K562 (cell line): ENCODE measurements at regions of chr12 and their contacts with region 1.

Region 1: DNA sequence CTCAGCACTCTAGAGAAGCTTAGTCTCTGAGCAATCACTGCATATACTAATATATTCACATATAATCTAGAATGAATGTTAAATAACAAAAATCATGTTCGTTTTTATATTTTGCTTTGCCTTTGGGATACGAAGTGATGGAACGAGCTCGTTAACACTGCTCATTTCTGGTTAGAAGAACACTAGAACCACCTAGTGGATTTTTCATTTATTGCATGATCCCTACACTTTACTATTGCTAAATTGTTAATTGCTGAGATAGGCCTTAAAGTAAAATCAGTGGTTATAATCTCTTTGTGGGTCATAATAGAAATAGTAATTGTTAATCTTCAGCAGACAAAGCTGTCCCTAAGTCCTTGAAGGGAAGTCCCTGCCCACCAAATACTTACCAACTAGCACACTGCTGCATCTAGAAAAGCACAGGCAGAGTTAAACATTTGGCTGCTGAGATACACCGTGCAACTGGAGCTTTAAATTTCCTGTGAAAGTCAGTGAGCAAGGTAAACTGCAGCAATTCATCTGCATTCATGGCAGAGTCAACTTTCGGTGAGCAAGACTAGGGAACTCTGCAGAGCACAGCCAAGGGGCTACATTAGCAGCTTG is 353.7 kb downstream of the APAF1 start:
- DNase-seq: peak; percentile 39 to 46 (median 41)
- ATAC-seq: peak; percentile 91
- H3K4me3 ChIP-seq: no peak overlapping the region
- H3K27ac ChIP-seq: no peak overlapping the region
- H3K4me1 ChIP-seq: no peaks in the 10 kb centered on the region
- H3K27me3 ChIP-seq: 0 out of 5 replicates have a peak, but pooled peaks cover 0 to 4% of the 10 kb centered on the region in 2 experiments
- CTCF ChIP-seq: peak; percentile 44 to 80 (median 44); a peak in 4 of 6 replicates
- EP300 ChIP-seq: no peak
- POLR2A ChIP-seq: no peak
- RAD21 ChIP-seq: peak; percentile 78 to 91

Region 2: DNA sequence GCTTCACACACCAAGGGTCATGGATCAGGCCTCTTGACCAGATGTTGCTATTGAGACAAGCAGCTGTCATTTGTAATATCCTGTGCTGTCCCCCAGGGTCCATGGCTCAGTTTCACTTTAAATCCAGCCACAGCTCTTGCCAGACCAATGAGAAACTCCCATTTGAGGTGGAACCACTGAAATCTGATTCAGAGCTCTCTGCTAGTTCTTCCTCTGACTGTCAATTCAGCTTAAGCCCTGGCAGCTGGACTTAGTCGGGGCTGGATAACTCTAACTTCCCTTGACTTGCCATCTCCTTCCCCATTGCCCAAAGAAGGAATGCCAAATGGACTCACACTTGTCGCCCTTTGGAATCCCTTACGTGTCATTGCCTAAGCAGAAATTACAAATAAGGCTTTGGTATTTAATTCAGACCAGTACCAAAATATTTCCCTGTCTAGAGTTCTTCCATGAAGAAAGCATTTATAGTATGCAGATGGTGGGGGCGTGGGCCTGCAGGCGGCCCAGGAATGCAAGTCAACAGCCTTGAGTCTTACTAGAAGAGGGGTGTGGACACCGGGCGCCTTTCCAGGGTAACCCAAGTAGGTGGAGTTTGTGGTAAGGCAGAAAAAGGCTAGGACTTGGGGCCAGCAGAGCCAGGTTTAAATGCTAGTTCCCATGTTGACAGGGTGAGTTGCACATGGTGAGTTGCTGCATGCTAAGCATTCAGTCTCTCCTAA is 580.3 kb before region 1 on chr12:
- CTCF ChIA-PET with region 1: no interaction called
- POLR2A ChIA-PET with region 1: no interaction called
- in situ Hi-C with region 1: loop called (anchors 25 kb)
- intact Hi-C with region 1: loop called (anchors 2 kb)
- DNase-seq: peak; percentile 37 to 60 (median 45)
- ATAC-seq: peak; percentile 71
- H3K4me3 ChIP-seq: no peak overlapping the region
- H3K27ac ChIP-seq: no peak overlapping the region
- H3K4me1 ChIP-seq: peaks cover 0 to 5% of the 10 kb centered on the region in 2 experiments; a peak in 4 of 5 replicates
- H3K27me3 ChIP-seq: peaks cover 3 to 41% of the 10 kb centered on the region in 2 experiments; a peak in 4 of 5 replicates
- CTCF ChIP-seq: no peak
- EP300 ChIP-seq: no peak
- POLR2A ChIP-seq: no peak
- RAD21 ChIP-seq: no peak

Region 3: GRCh38 chr12:98424726-98425401 is 573.9 kb before region 1 on chr12:
- CTCF ChIA-PET with region 1: interaction called, 3 read pairs
- POLR2A ChIA-PET with region 1: no interaction called
- in situ Hi-C with region 1: loop called (anchors 25 kb)
- intact Hi-C with region 1: no loop called
- DNase-seq: peak; percentile 60 to 78 (median 74)
- ATAC-seq: peak; percentile 91
- H3K4me3 ChIP-seq: no peak overlapping the region
- H3K27ac ChIP-seq: no peak overlapping the region
- H3K4me1 ChIP-seq: peaks cover 3 to 7% of the 10 kb centered on the region in 2 experiments; a peak in 2 of 5 replicates
- H3K27me3 ChIP-seq: peaks cover 3 to 38% of the 10 kb centered on the region in 2 experiments; a peak in 4 of 5 replicates
- CTCF ChIP-seq: peak; percentile 73 to 83 (median 76)
- EP300 ChIP-seq: no peak
- POLR2A ChIP-seq: no peak
- RAD21 ChIP-seq: peak; percentile 71 to 79

Region 4: GRCh38 chr12:98698603-98699463 is 300.0 kb before region 1 on chr12:
- CTCF ChIA-PET with region 1: no interaction called
- POLR2A ChIA-PET with region 1: interaction called, 3 read pairs
- in situ Hi-C with region 1: no loop called
- intact Hi-C with region 1: loop called (anchors 10 kb)
- DNase-seq: peak; percentile 30 to 70 (median 44)
- ATAC-seq: peak; percentile 89
- H3K4me3 ChIP-seq: no peak overlapping the region
- H3K27ac ChIP-seq: no peak overlapping the region
- H3K4me1 ChIP-seq: peaks cover 4% of the 10 kb centered on the region in 2 experiments; a peak in 2 of 5 replicates
- H3K27me3 ChIP-seq: no peaks in the 10 kb centered on the region
- CTCF ChIP-seq: peak; percentile 67 to 77 (median 69)
- EP300 ChIP-seq: no peak
- POLR2A ChIP-seq: no peak
- RAD21 ChIP-seq: peak; percentile 30 to 76; a peak in 2 of 4 replicates

Region 5: DNA sequence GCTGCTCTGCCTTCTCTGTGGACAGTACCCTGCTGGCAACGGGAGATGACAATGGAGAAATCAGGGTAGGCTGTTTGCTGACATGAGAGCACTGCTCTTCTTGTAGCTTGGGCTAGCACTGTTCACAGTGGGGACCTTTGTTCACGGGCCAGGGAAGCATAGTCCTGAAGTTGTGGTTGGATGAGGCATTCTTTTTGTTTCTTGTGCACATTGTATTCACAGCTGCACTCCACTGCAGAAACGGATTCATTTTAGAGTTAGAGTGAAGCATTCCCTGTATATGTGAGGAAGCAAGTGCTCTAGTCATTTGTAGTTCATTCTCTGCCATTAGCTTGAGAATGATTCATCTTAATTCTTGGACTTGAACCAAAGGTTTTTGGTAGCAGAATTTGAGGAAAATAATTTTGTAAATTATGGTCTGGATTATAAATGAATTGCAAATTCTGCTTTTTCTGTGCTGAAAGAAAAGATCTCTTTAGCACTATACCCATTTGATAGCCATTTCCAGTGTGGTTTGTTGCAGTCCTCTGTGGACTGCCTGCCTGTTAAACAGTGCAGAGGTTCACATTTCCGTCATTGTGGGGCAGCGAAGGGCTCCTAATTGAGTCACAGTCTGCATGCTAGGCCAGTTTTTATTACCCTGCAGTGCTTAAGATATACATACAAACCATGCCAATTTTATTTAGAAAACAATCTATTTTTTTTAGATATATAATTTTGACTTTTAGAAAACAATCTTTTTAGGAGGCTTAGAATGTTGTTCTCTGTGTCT is 273.1 kb before region 1 on chr12:
- CTCF ChIA-PET with region 1: no interaction called
- POLR2A ChIA-PET with region 1: no interaction called
- in situ Hi-C with region 1: no loop called
- intact Hi-C with region 1: loop called (anchors 5 kb)
- DNase-seq: peak in 3 of 4 experiments; percentile 20 to 54 (median 48)
- ATAC-seq: peak; percentile 94
- H3K4me3 ChIP-seq: no peak overlapping the region
- H3K27ac ChIP-seq: no peak overlapping the region
- H3K4me1 ChIP-seq: 0 out of 5 replicates have a peak, but pooled peaks cover 0 to 3% of the 10 kb centered on the region in 2 experiments
- H3K27me3 ChIP-seq: no peaks in the 10 kb centered on the region
- CTCF ChIP-seq: peak; percentile 46 to 61 (median 52); a peak in 5 of 6 replicates
- EP300 ChIP-seq: no peak
- POLR2A ChIP-seq: no peak
- RAD21 ChIP-seq: peak; percentile 43 to 67

Region 6: GRCh38 chr12:98870504-98870903 is 128.3 kb before region 1 on chr12:
- CTCF ChIA-PET with region 1: no interaction called
- POLR2A ChIA-PET with region 1: no interaction called
- in situ Hi-C with region 1: no loop called
- intact Hi-C with region 1: no loop called
- DNase-seq: no peak
- ATAC-seq: no peak
- H3K4me3 ChIP-seq: no peak overlapping the region
- H3K27ac ChIP-seq: no peak overlapping the region
- H3K4me1 ChIP-seq: no peaks in the 10 kb centered on the region
- H3K27me3 ChIP-seq: peaks cover 0 to 10% of the 10 kb centered on the region in 2 experiments; a peak in 2 of 5 replicates
- CTCF ChIP-seq: no peak
- EP300 ChIP-seq: no peak
- POLR2A ChIP-seq: no peak
- RAD21 ChIP-seq: no peak

Region 7: DNA sequence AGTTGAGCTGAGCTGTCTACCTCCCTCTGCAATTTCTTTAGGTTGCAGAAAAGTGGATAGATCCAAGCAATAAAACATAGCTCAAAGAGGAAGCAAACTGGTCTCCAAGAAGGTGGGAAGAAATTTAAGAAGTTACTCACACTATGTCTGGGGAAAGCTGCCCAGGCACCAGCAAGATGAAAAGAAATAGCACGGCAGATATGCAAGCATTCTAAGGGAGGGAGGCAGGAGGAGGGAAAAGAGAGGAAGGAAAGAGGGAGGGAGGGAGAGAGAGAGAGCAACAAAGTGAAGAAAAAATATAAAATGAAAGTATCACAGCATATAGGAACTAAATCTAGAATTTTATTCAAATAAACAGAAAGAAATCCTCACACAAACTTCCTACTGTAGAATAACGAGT is 113.0 kb before region 1 on chr12:
- CTCF ChIA-PET with region 1: no interaction called
- POLR2A ChIA-PET with region 1: no interaction called
- in situ Hi-C with region 1: no loop called
- intact Hi-C with region 1: loop called (anchors 5 kb)
- DNase-seq: no peak
- ATAC-seq: no peak
- H3K4me3 ChIP-seq: no peak overlapping the region
- H3K27ac ChIP-seq: no peak overlapping the region
- H3K4me1 ChIP-seq: no peaks in the 10 kb centered on the region
- H3K27me3 ChIP-seq: peaks cover 0 to 2% of the 10 kb centered on the region in 2 experiments; a peak in 1 of 5 replicates
- CTCF ChIP-seq: no peak
- EP300 ChIP-seq: no peak
- POLR2A ChIP-seq: no peak
- RAD21 ChIP-seq: no peak

Region 8: DNA sequence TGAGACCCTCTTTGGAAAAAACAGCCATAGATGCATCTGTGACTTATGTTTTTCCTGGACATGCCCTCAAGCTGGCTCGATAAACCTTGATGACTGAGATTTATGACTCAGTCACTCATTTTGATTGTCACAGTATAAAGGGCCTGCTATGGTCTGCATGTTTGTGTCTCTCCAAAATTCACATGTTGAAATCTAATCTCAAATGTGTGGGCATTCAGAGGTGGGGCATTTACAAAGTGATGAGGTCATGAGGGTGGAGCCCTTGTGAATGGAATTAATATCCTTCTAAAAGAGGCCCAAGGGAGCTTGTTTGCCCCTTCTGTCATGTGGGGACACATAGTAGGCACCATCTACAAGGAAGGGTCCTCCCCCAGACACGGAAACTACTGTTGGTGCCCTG is 19.2 kb after region 1 on chr12:
- CTCF ChIA-PET with region 1: no interaction called
- POLR2A ChIA-PET with region 1: no interaction called
- in situ Hi-C with region 1: no loop called
- intact Hi-C with region 1: no loop called
- DNase-seq: no peak
- ATAC-seq: no peak
- H3K4me3 ChIP-seq: no peak overlapping the region
- H3K27ac ChIP-seq: no peak overlapping the region
- H3K4me1 ChIP-seq: no peaks in the 10 kb centered on the region
- H3K27me3 ChIP-seq: no peaks in the 10 kb centered on the region
- CTCF ChIP-seq: no peak
- EP300 ChIP-seq: no peak
- POLR2A ChIP-seq: no peak
- RAD21 ChIP-seq: no peak